GM10248 (cell line): ENCODE measurements at regions of chr7 and their contacts with region 1.

Region 1: GRCh38 chr7:95861041-95861440 is 88.7 kb downstream of the DYNC1I1 start:
- DNase-seq: no peak
- CTCF ChIP-seq: no peak

Region 2: DNA sequence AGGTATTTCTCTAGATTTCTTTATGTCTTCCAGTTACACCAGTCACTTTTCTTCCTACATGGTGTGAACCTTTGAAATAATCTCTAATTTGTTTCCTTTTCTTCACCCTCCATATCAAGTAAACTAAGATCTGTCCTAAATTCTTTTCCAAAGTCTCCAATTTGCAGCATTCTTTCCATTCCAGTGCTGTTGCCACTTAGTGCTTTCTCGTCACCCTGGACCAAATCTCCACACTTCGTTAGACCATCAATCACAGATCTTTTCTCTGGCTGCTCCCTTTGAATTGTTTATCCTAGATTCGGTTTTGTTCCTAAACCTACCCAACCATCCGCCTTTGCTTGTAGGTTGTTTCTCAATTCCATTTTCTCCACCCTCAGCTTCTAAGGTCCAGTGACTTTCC is 14.0 kb before region 1 on chr7:
- CTCF ChIA-PET with region 1: no interaction called
- POLR2A ChIA-PET with region 1: no interaction called
- DNase-seq: no peak
- CTCF ChIP-seq: no peak

Region 3: GRCh38 chr7:95871078-95871782 is 10.2 kb after region 1 on chr7:
- CTCF ChIA-PET with region 1: interaction called, 12 read pairs
- POLR2A ChIA-PET with region 1: no interaction called
- DNase-seq: peak; percentile 49
- CTCF ChIP-seq: peak; percentile 55